Endothelial cell of umbilical vein (primary cell): ENCODE measurements at regions of chr3 and their contacts with region 1.

Region 1: DNA sequence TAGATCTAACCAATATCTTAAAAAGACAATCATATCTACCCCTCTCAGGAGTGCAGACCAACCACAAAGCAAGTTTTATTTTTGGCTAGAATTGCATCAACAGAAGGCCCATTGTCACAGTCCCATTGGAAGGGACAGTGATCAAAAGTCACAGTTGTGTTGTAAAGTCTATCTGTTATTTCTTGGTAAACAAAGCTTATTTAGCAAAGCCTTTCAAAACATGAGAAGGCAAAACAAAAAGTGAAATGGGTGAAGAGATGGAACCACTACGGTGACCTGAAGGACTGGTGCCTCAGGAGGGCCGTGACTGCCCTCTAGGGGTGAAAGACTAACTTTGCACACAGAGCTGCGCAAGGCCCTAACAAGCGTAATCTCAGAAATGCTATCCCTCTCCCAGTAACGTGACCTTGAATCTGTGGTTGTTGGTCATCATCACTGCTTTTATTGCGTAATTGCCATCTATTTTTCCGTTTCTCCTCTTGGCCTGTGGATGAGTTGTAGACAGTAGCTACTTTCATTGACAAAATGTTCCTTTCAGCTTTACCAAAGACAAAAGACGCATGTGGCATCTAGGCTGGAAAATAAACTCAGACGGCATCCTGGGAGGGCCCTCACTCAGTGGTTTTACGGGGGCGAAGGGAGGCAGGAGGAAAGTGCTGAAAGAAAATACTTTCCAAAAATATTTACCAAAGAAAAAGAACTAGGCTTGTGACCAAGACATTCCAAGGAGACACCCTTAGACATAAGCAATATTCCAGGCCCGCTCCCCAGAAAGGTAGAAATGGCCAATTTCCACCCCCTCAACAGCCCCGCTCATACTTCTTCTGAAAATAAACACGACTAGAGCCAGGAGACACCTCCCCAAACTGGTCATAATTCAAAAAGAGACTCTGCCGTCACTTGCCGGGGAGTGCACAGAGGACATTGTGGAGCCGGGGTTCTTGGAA is 79.4 kb downstream of the FRMD4B start:
- DNase-seq: peak; percentile 85
- H3K4me3 ChIP-seq: no peak overlapping the region
- H3K27ac ChIP-seq: no peak overlapping the region
- H3K4me1 ChIP-seq: peaks cover 12% of the 10 kb centered on the region
- H3K27me3 ChIP-seq: no peaks in the 10 kb centered on the region
- CTCF ChIP-seq: peak; percentile 89 to 92
- POLR2A ChIP-seq: no peak

Region 2: GRCh38 chr3:69120879-69121464 is 185.5 kb before region 1 on chr3:
- CTCF ChIA-PET with region 1: interaction called, 65 read pairs
- POLR2A ChIA-PET with region 1: no interaction called
- dilution Hi-C with region 1: no loop called
- intact Hi-C with region 1: loop called (anchors 1 kb)
- DNase-seq: peak; percentile 86
- H3K4me3 ChIP-seq: no peak overlapping the region
- H3K27ac ChIP-seq: no peak overlapping the region
- H3K4me1 ChIP-seq: peaks cover 20% of the 10 kb centered on the region
- H3K27me3 ChIP-seq: no peaks in the 10 kb centered on the region
- CTCF ChIP-seq: peak; percentile 85 to 88
- POLR2A ChIP-seq: no peak

Region 3: DNA sequence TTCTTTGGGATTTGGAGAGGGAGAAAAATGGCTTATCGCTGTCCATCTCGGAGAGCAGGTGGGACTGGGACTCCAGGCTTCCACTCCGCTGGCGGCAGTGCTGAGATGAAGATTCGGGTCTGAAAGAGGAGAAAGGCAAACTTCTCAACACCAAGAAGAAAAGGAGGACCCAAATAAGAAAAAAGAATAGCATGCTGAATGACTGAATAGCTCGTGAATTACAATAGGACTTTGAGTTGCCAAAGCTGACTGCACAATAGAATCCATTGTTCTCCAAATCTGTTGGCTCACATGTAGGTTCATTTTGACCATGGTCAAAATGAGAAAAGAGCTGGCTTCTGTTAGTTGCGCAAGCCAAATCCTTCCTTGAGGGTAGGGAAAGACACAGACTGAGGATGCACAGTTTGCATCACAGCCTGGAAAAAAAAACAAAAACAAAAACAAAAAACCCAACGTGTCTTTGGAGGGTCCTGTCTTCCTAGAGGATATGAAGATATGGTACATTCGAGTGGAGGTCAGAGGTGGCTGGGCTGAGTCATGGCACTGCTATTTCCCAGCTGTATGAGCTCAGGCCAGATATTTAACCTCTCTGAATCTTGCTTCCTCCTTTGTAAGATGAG is 124.8 kb before region 1 on chr3:
- CTCF ChIA-PET with region 1: interaction called, 18 read pairs
- POLR2A ChIA-PET with region 1: no interaction called
- dilution Hi-C with region 1: no loop called
- intact Hi-C with region 1: no loop called
- DNase-seq: peak; percentile 98
- H3K4me3 ChIP-seq: no peak overlapping the region
- H3K27ac ChIP-seq: peak overlapping the region; percentile 93
- H3K4me1 ChIP-seq: peaks cover 59% of the 10 kb centered on the region
- H3K27me3 ChIP-seq: no peaks in the 10 kb centered on the region
- CTCF ChIP-seq: no peak
- POLR2A ChIP-seq: peak; percentile 31

Region 4: DNA sequence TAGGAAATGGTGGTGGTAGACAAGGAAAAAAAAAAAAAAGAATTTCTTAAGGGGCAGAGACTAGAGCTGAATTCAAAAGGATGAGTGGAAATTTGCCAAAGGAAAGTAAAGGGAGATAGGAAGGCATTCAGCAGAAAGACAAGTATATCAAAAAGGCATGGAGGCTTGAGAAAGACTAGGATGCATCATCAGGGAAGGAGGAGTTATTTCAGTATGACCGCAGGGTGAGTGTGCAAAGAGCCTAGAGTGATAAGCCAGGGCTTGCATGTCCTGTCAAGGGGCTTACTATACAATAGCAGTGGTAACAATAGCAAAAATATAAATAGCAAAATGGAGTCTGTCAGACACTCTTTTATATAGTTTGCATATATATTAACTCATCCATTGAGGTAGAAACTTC is 32.6 kb before region 1 on chr3:
- CTCF ChIA-PET with region 1: interaction called, 10 read pairs
- POLR2A ChIA-PET with region 1: no interaction called
- dilution Hi-C with region 1: no loop called
- intact Hi-C with region 1: no loop called
- DNase-seq: no peak
- H3K4me3 ChIP-seq: no peak overlapping the region
- H3K27ac ChIP-seq: no peak overlapping the region
- H3K4me1 ChIP-seq: no peaks in the 10 kb centered on the region
- H3K27me3 ChIP-seq: no peaks in the 10 kb centered on the region
- CTCF ChIP-seq: no peak
- POLR2A ChIP-seq: no peak

Region 5: DNA sequence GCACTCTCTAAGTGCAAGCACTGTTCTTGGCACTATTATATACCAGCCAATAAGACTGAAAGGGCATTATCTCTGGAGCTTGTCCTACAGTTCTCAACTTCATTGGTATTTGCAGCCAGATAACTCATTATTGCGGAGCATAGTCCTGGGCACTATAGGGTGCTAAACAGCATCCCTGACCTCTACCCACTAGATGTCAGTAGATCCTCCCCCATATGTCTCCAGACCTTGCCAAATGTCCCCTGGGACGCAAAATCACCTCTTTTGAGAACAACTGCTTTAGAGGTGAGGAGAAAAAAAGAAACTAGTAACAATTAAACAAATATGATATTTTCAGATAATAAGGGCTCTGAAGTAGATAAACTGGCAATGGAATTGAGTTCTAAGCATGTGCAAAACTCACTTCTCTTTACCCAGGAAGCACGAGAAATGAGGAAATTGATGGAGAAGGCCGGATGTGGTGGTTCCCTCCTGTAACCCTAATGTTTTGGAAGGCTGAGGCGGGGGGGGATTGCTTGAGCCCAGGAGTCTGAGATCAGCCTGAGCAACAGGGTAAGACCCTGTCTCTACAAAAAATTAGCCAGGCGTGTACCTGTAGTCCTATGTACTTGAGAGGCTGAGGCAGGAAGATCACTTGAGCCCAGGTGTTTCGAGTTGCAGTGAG is 18.0 kb after region 1 on chr3:
- CTCF ChIA-PET with region 1: interaction called, 11 read pairs
- POLR2A ChIA-PET with region 1: interaction called, 3 read pairs
- dilution Hi-C with region 1: no loop called
- intact Hi-C with region 1: no loop called
- DNase-seq: no peak
- H3K4me3 ChIP-seq: no peak overlapping the region
- H3K27ac ChIP-seq: no peak overlapping the region
- H3K4me1 ChIP-seq: peaks cover 28% of the 10 kb centered on the region
- H3K27me3 ChIP-seq: no peaks in the 10 kb centered on the region
- CTCF ChIP-seq: no peak
- POLR2A ChIP-seq: no peak

Region 6: GRCh38 chr3:69392850-69393249 is 86.3 kb after region 1 on chr3:
- CTCF ChIA-PET with region 1: no interaction called
- POLR2A ChIA-PET with region 1: no interaction called
- dilution Hi-C with region 1: no loop called
- intact Hi-C with region 1: no loop called
- DNase-seq: no peak
- H3K4me3 ChIP-seq: no peak overlapping the region
- H3K27ac ChIP-seq: no peak overlapping the region
- H3K4me1 ChIP-seq: peaks cover 7% of the 10 kb centered on the region
- H3K27me3 ChIP-seq: no peaks in the 10 kb centered on the region
- CTCF ChIP-seq: no peak
- POLR2A ChIP-seq: no peak

Region 7: GRCh38 chr3:69425261-69425660 is 118.7 kb after region 1 on chr3:
- CTCF ChIA-PET with region 1: interaction called, 47 read pairs
- POLR2A ChIA-PET with region 1: no interaction called
- dilution Hi-C with region 1: no loop called
- intact Hi-C with region 1: loop called (anchors 1 kb)
- DNase-seq: peak; percentile 69
- H3K4me3 ChIP-seq: no peak overlapping the region
- H3K27ac ChIP-seq: no peak overlapping the region
- H3K4me1 ChIP-seq: peaks cover 15% of the 10 kb centered on the region
- H3K27me3 ChIP-seq: no peaks in the 10 kb centered on the region
- CTCF ChIP-seq: peak; percentile 71 to 74
- POLR2A ChIP-seq: no peak

Region 8: DNA sequence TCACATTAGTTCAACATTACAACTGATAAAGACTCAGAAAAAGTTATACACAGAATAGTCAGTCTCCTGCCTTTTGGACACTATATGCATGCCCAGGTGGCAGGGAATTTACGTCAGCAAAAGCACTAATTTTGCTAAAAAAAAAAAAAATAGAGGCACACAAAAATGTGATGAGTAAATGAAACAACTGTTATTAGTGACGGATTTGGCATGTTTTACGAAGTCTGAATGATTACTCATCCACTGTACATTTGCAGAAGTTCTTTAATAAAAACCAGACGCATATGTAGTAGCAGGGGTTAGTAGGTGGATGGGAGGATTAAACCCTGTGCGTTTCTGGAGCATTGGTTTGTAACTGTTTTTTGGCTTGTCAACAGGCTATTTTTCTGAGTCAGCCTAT is 531.7 kb after region 1 on chr3:
- CTCF ChIA-PET with region 1: no interaction called
- POLR2A ChIA-PET with region 1: no interaction called
- dilution Hi-C with region 1: no loop called
- intact Hi-C with region 1: no loop called
- DNase-seq: no peak
- H3K4me3 ChIP-seq: no peak overlapping the region
- H3K27ac ChIP-seq: no peak overlapping the region
- H3K4me1 ChIP-seq: no peaks in the 10 kb centered on the region
- H3K27me3 ChIP-seq: no peaks in the 10 kb centered on the region
- CTCF ChIP-seq: no peak
- POLR2A ChIP-seq: no peak